ENCODE measurements at regions of chr10 and their contacts with region 1.

Region 1: GRCh38 chr10:114937962-114938855 is at the start of gene TRUB1:
- DNase-seq: peak; percentile 94
- H3K4me3 Mint-ChIP-seq: peak within 1 kb of the TSS; percentile 96
- H3K27ac Mint-ChIP-seq: peak within 1 kb of the TSS; percentile 80
- H3K4me1 Mint-ChIP-seq: peaks cover 28% of the 10 kb centered on the region
- H3K27me3 Mint-ChIP-seq: no peaks in the 10 kb centered on the region
- total RNA-seq, gene TRUB1: 13.4 to 16.2 TPM

Region 2: DNA sequence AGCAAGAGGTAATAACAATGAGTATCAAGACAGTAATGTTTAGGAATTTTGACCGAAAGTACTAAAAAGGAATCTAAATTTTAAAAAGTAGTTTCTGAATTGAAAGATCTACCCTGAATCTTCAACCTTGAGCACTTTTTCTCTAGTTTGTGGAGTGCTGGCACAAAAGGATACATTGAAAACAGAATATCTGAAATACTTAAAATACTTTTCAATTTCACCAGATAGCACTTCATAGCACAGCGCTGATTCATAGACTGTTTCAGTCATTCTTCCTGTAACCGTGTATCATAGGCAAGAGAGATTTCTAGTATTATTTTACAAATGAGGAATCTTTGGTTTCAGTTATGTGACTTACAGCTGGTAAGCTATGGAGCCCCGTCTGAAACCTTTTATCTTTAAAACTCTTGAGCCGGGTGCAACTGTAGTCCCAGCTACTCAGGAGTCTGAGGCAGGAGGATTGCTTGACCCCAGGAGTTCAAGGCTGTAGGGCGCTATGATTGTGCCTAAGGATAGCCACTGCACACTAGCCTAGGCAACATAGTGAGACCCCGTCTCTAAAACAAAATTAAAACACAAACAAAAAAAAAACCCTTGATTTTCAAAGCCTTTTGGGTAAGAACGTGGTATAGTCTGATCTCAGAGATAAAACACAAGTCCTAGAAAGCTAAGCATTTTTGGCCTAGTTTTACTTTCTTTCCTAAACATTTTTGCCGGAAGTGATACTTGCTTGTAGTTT is 81.5 kb before region 1 on chr10:
- CTCF ChIA-PET with region 1: no interaction called
- POLR2A ChIA-PET with region 1: interaction called, 4 read pairs
- intact Hi-C with region 1: loop called (anchors 1 kb)
- DNase-seq: no peak
- H3K4me3 Mint-ChIP-seq: peak overlapping the region; percentile 23
- H3K27ac Mint-ChIP-seq: peak overlapping the region; percentile 44
- H3K4me1 Mint-ChIP-seq: peaks cover 25% of the 10 kb centered on the region
- H3K27me3 Mint-ChIP-seq: no peaks in the 10 kb centered on the region

Region 3: DNA sequence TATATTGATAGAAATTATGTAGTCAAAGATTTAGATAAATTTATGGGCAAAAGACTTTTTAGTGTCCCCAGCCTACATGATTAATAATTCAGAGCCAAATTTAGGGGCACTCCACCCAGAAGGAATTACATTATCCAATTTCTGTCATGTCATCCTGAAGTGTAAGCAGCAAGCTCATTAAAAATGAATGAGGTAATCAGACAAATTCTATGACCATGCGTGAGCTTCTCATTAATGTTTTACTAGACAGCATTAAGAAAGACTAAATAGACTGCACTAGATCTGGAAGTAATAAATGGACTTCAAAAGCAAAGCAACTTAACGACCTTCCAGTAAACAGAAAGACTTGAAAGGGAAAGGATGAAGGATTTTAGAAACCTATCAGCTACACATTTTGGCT is 22.9 kb before region 1 on chr10:
- CTCF ChIA-PET with region 1: interaction called, 4 read pairs
- POLR2A ChIA-PET with region 1: no interaction called
- intact Hi-C with region 1: loop called (anchors 1 kb)
- DNase-seq: no peak
- H3K4me3 Mint-ChIP-seq: no peak overlapping the region
- H3K27ac Mint-ChIP-seq: no peak overlapping the region
- H3K4me1 Mint-ChIP-seq: peaks cover 11% of the 10 kb centered on the region
- H3K27me3 Mint-ChIP-seq: peaks cover 1% of the 10 kb centered on the region

Region 4: GRCh38 chr10:114925587-114926586 is 12.3 kb before region 1 on chr10:
- CTCF ChIA-PET with region 1: no interaction called
- POLR2A ChIA-PET with region 1: interaction called, 3 read pairs
- intact Hi-C with region 1: loop called (anchors 1 kb)
- DNase-seq: peak; percentile 64
- H3K4me3 Mint-ChIP-seq: no peak overlapping the region
- H3K27ac Mint-ChIP-seq: no peak overlapping the region
- H3K4me1 Mint-ChIP-seq: peaks cover 12% of the 10 kb centered on the region
- H3K27me3 Mint-ChIP-seq: peaks cover 13% of the 10 kb centered on the region

Region 5: GRCh38 chr10:115092555-115093285 is 154.5 kb after region 1 on chr10:
- CTCF ChIA-PET with region 1: no interaction called
- POLR2A ChIA-PET with region 1: no interaction called
- intact Hi-C with region 1: loop called (anchors 1 kb)
- DNase-seq: peak; percentile 22
- H3K4me3 Mint-ChIP-seq: peak overlapping the region; percentile 69
- H3K27ac Mint-ChIP-seq: no peak overlapping the region
- H3K4me1 Mint-ChIP-seq: peaks cover 10% of the 10 kb centered on the region
- H3K27me3 Mint-ChIP-seq: peaks cover 38% of the 10 kb centered on the region

Measured in activated CD4-positive, alpha-beta memory T cell treated with anti-CD3 and anti-CD28 coated beads for 36 hours (primary cell).